Activated CD4-positive, alpha-beta T cell treated with anti-CD3 and anti-CD28 coated beads for 36 hours (primary cell): ENCODE measurements at regions of chr4 and their contacts with region 1.

Region 1: DNA sequence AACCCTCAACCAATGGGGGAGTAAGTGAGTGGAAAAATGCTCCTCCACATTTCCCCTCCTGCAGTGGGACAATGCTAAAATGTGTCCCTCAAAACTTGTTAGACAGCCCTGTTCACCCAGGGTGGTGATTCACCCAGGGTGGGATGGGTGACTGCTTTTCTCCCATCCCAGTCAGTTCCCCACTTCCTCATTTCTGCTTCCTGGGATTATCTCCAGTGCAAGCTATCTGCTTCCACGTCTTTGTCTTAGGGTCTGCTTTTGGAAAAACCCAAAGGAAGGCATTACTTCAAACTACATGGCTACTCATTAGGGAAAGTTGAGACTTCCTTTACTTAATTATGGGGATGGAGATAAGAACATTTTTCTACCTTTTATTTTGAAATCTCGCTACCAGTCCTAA is 45.5 kb downstream of the ETNPPL start:
- DNase-seq: no peak
- ATAC-seq: no peak
- H3K4me3 Mint-ChIP-seq: no peak overlapping the region
- H3K27ac Mint-ChIP-seq: no peak overlapping the region
- H3K4me1 Mint-ChIP-seq: no peaks in the 10 kb centered on the region
- H3K27me3 Mint-ChIP-seq: peaks cover 1% of the 10 kb centered on the region

Region 2: GRCh38 chr4:108762559-108763225 is 45.3 kb after region 1 on chr4 and contains the start of gene ETNPPL:
- CTCF ChIA-PET with region 1: no interaction called
- POLR2A ChIA-PET with region 1: no interaction called
- intact Hi-C with region 1: loop called in 1 of 2 experiments (anchors 1 kb)
- DNase-seq: peak; percentile 49
- ATAC-seq: peak; percentile 79
- H3K4me3 Mint-ChIP-seq: peak within 1 kb of the TSS; percentile 68
- H3K27ac Mint-ChIP-seq: peak within 1 kb of the TSS; percentile 40
- H3K4me1 Mint-ChIP-seq: peaks cover 11% of the 10 kb centered on the region
- H3K27me3 Mint-ChIP-seq: peaks cover 31% of the 10 kb centered on the region
- total RNA-seq, gene ETNPPL: not detected